ENCODE measurements at regions of chr15 and their contacts with region 1.

Region 1: GRCh38 chr15:34969340-34970097 is at the start of gene AQR:
- DNase-seq: peak; percentile 83 to 95 (median 91)
- ATAC-seq: peak; percentile 92 to 94
- H3K4me3 Mint-ChIP-seq: peak within 1 kb of the TSS; percentile 96 to 100 (median 100)
- H3K27ac Mint-ChIP-seq: peak within 1 kb of the TSS; percentile 92 to 99 (median 98)
- H3K4me1 Mint-ChIP-seq: peaks cover 24 to 51% (median 48%) of the 10 kb centered on the region in 4 donors
- H3K27me3 Mint-ChIP-seq: no peaks in the 10 kb centered on the region
- polyA plus RNA-seq, gene AQR: 10.3 to 16.0 (median 13.5) TPM

Region 2: DNA sequence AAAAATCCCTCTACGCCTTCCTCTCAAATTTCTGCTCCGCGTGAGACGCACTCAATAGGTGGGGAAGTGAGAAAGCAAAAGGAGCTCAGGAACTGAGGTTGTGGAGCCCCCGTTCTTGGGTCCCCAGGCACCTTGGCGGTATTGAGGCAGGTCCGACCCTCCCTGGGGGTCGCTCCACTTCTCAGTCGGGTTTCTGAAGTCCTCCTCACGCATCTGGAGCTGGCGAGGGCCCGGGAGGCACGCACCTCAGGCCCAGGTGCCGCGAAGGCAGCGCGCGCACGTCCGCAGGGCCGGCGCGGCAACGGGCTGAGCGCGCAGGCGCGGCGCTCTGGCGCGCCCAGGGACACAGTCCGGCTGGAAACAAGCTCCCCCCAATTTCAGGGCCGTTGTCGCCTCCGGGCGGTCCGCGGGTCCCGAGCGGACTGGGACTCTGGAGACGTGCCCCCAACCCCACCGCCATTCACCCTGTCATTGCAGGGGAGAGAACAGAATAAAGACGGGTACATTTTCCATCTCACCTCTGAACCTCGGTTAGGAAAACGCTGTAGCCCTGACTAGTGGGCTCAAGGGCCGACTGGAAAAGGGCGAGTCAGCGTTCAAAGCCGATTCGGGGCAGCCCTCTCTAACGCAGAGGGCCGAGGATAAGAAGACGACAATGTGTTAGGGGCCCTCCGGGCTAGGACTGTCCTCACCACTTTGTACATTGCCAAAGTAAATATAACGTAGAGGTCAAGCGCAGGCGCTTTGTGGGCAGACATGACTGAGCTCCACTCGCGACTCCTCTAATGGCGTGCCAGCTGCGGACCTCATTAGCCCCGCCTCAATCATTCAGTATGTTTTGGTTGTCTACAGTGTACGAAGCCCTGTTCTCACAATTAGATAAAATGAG is 18.7 kb after region 1 on chr15 and contains the start of gene ZNF770:
- POLR2A ChIA-PET with region 1: interaction called, 157 read pairs
- DNase-seq: peak; percentile 69 to 94 (median 82)
- ATAC-seq: peak; percentile 83 to 84
- H3K4me3 Mint-ChIP-seq: peak within 1 kb of the TSS; percentile 93 to 99 (median 98)
- H3K27ac Mint-ChIP-seq: peak within 1 kb of the TSS; percentile 98 to 100 (median 99)
- H3K4me1 Mint-ChIP-seq: peaks cover 12 to 48% (median 41%) of the 10 kb centered on the region in 4 donors
- H3K27me3 Mint-ChIP-seq: peaks cover 0 to 2% (median 0%) of the 10 kb centered on the region in 5 donors
- polyA plus RNA-seq, gene ZNF770: 93.6 to 112 (median 110) TPM